Caco-2 (cell line): ENCODE measurements at regions of chr4 and their contacts with region 1.

Region 1: GRCh38 chr4:95835672-95836071 is 4.2 kb upstream of the PDHA2 start:
- DNase-seq: peak in 1 of 2 experiments; percentile 14
- H3K4me3 ChIP-seq: no peak overlapping the region
- H3K4me3 Mint-ChIP-seq: no peak overlapping the region
- H3K27ac Mint-ChIP-seq: no peak overlapping the region
- H3K4me1 ChIP-seq: no peaks in the 10 kb centered on the region
- H3K4me1 Mint-ChIP-seq: no peaks in the 10 kb centered on the region
- H3K27me3 ChIP-seq: no peaks in the 10 kb centered on the region
- H3K27me3 Mint-ChIP-seq: no peaks in the 10 kb centered on the region
- CTCF ChIP-seq: peak; percentile 50 to 56

Region 2: DNA sequence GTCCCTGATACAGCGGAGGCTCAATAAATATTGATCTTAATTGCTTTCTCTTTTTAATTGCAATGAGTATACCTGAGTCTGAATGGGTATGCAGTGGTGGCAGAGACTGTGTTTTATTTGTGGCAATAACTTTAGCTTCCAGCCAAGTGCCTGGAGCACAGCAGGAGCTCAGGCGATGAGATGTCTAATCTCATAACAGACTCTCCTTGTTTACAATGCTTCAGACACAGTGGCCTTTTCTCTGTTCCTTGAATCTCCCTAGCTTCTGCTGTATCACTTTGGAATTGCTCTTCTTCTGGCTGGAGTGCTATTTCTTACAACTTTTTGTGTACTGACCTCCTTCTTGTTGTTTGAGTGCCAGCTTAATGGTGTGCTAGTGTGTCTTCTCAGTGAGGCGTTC is 195.4 kb before region 1 on chr4:
- CTCF ChIA-PET with region 1: no interaction called
- POLR2A ChIA-PET with region 1: no interaction called
- intact Hi-C with region 1: no loop called
- DNase-seq: no peak
- H3K4me3 ChIP-seq: no peak overlapping the region
- H3K4me3 Mint-ChIP-seq: no peak overlapping the region
- H3K27ac Mint-ChIP-seq: no peak overlapping the region
- H3K4me1 ChIP-seq: peaks cover 7% of the 10 kb centered on the region; the same call in 1 of the 2 replicates
- H3K4me1 Mint-ChIP-seq: no peaks in the 10 kb centered on the region
- H3K27me3 ChIP-seq: no peaks in the 10 kb centered on the region
- H3K27me3 Mint-ChIP-seq: no peaks in the 10 kb centered on the region
- CTCF ChIP-seq: no peak

Region 3: DNA sequence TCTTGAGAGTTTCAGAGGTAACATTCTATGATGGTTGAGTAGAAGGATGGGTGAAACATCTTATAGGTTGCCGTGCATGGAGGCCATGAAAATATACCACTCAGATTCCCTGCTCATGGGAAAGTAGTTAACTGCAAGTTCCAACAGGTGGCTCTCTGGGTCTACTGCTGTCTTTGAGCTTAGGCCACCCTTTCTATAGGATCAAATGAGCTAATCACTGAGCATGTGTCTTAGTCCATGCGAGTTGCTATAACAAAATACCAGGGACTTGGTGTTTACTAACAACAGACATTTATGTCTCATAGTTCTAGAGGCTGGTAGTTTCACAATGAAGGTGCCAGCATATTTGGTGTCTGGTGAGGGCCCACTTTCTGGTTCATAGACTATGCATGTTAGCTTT is 142.1 kb before region 1 on chr4:
- CTCF ChIA-PET with region 1: no interaction called
- POLR2A ChIA-PET with region 1: no interaction called
- intact Hi-C with region 1: loop called (anchors 5 kb)
- DNase-seq: peak in 1 of 2 experiments; percentile 2
- H3K4me3 ChIP-seq: no peak overlapping the region
- H3K4me3 Mint-ChIP-seq: no peak overlapping the region
- H3K27ac Mint-ChIP-seq: no peak overlapping the region
- H3K4me1 ChIP-seq: no peaks in the 10 kb centered on the region
- H3K4me1 Mint-ChIP-seq: no peaks in the 10 kb centered on the region
- H3K27me3 ChIP-seq: no peaks in the 10 kb centered on the region
- H3K27me3 Mint-ChIP-seq: peaks cover 4% of the 10 kb centered on the region
- CTCF ChIP-seq: peak in 1 of 2 experiments; percentile 34

Region 4: DNA sequence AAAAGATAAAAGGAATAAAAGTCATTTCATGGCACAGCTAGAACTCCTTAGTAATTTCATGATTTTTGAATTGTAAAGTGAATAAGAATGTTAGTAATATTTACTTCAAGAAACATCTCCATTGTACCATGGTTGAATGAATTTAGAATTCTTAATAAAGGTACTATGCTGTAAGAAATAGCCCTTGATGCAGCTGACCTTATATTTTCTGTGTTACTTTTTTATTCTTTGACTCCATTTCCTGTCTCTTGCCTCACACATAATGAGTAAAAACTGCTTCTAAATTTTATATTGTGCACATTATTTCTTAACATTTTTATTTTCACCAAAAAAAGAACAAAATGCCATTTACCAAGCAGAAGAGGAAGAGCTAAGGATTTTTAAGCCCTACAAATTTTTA is 77.7 kb before region 1 on chr4:
- CTCF ChIA-PET with region 1: no interaction called
- POLR2A ChIA-PET with region 1: no interaction called
- intact Hi-C with region 1: no loop called
- DNase-seq: no peak
- H3K4me3 ChIP-seq: no peak overlapping the region
- H3K4me3 Mint-ChIP-seq: no peak overlapping the region
- H3K27ac Mint-ChIP-seq: no peak overlapping the region
- H3K4me1 ChIP-seq: no peaks in the 10 kb centered on the region
- H3K4me1 Mint-ChIP-seq: no peaks in the 10 kb centered on the region
- H3K27me3 ChIP-seq: no peaks in the 10 kb centered on the region
- H3K27me3 Mint-ChIP-seq: peaks cover 8% of the 10 kb centered on the region
- CTCF ChIP-seq: no peak

Region 5: GRCh38 chr4:95898226-95898625 is 62.6 kb after region 1 on chr4:
- CTCF ChIA-PET with region 1: no interaction called
- POLR2A ChIA-PET with region 1: no interaction called
- intact Hi-C with region 1: loop called (anchors 5 kb)
- DNase-seq: no peak
- H3K4me3 ChIP-seq: no peak overlapping the region
- H3K4me3 Mint-ChIP-seq: no peak overlapping the region
- H3K27ac Mint-ChIP-seq: no peak overlapping the region
- H3K4me1 ChIP-seq: no peaks in the 10 kb centered on the region
- H3K4me1 Mint-ChIP-seq: no peaks in the 10 kb centered on the region
- H3K27me3 ChIP-seq: no peaks in the 10 kb centered on the region
- H3K27me3 Mint-ChIP-seq: no peaks in the 10 kb centered on the region
- CTCF ChIP-seq: no peak

Region 6: DNA sequence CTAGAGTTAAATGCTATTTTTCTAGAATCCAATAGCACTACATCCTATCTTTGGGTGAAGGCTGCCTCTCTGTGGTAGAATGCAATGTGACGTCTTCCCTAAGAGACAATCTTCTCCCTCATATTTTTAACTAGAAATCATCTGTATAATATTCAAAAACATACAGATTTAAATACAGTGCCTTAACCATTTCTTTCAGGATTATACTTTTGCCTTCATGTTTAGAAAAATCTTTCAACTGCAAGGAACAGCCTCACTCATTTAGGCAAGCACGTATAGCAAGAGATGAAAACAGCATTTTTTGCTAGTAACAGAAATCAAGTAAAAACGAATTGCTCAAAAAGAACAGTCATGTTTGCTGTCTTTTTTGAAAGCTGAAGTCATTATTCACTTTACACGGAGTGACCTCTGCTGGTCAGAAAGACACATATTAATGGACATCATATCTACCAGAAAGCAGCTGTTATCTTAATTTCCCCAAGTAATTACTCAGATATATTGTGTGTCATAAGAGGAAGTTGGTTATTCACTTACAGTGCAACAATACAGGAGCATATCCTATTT is 1885.3 kb after region 1 on chr4:
- CTCF ChIA-PET with region 1: no interaction called
- POLR2A ChIA-PET with region 1: no interaction called
- intact Hi-C with region 1: loop called (anchors 5 kb)
- DNase-seq: peak in 1 of 2 experiments; percentile 1
- H3K4me3 ChIP-seq: no peak overlapping the region
- H3K4me3 Mint-ChIP-seq: no peak overlapping the region
- H3K27ac Mint-ChIP-seq: no peak overlapping the region
- H3K4me1 ChIP-seq: no peaks in the 10 kb centered on the region
- H3K4me1 Mint-ChIP-seq: no peaks in the 10 kb centered on the region
- H3K27me3 ChIP-seq: no peaks in the 10 kb centered on the region
- H3K27me3 Mint-ChIP-seq: peaks cover 2% of the 10 kb centered on the region
- CTCF ChIP-seq: peak in 1 of 2 experiments; percentile 22